ENCODE measurements at regions of chr5 and their contacts with region 1.

Region 1: DNA sequence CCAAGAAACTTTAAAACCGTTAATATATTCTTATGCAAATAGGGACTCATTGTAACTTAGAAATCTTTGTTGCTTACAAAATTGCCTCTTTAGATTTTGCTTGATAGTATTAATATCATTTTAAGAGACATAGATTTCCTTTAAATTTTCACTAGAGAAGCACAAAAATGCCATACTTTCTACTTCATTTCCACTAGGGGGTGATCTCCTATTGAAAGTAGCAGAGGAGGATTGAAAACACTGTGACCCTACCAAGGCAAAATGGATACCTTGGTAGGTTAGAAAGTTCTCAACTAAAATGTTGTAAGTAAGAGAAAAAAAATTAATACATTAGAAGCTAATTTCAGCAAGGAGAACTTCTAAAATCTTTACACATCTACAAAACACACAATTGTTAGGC is 204.9 kb downstream of the CHSY3 start:
- DNase-seq: peak; percentile 40
- H3K4me3 ChIP-seq: no peak overlapping the region
- H3K27ac ChIP-seq: no peak overlapping the region
- H3K4me1 ChIP-seq: no peaks in the 10 kb centered on the region
- H3K27me3 ChIP-seq: peaks cover 25% of the 10 kb centered on the region
- CTCF ChIP-seq: peak; percentile 66

Region 2: GRCh38 chr5:130171699-130172098 is 62.5 kb after region 1 on chr5:
- CTCF ChIA-PET with region 1: no interaction called
- POLR2A ChIA-PET with region 1: no interaction called
- intact Hi-C with region 1: no loop called
- DNase-seq: no peak
- H3K4me3 ChIP-seq: no peak overlapping the region
- H3K27ac ChIP-seq: no peak overlapping the region
- H3K4me1 ChIP-seq: no peaks in the 10 kb centered on the region
- H3K27me3 ChIP-seq: no peaks in the 10 kb centered on the region
- CTCF ChIP-seq: no peak

Region 3: GRCh38 chr5:130720355-130720754 is 611.2 kb after region 1 on chr5:
- CTCF ChIA-PET with region 1: no interaction called
- POLR2A ChIA-PET with region 1: no interaction called
- intact Hi-C with region 1: loop called (anchors 10 kb)
- DNase-seq: peak; percentile 56
- H3K4me3 ChIP-seq: no peak overlapping the region
- H3K27ac ChIP-seq: no peak overlapping the region
- H3K4me1 ChIP-seq: no peaks in the 10 kb centered on the region
- H3K27me3 ChIP-seq: peaks cover 3% of the 10 kb centered on the region
- CTCF ChIP-seq: peak; percentile 53

Region 4: GRCh38 chr5:131005963-131006684 is 897.0 kb after region 1 on chr5:
- CTCF ChIA-PET with region 1: no interaction called
- POLR2A ChIA-PET with region 1: no interaction called
- intact Hi-C with region 1: loop called (anchors 5 kb)
- DNase-seq: peak; percentile 45
- H3K4me3 ChIP-seq: no peak overlapping the region
- H3K27ac ChIP-seq: no peak overlapping the region
- H3K4me1 ChIP-seq: no peaks in the 10 kb centered on the region
- H3K27me3 ChIP-seq: peaks cover 63% of the 10 kb centered on the region
- CTCF ChIP-seq: peak; percentile 43